Endothelial cell of umbilical vein (primary cell): ENCODE measurements at regions of chr5 and their contacts with region 1.

Region 1: GRCh38 chr5:77491783-77492652 is at the start of gene WDR41:
- DNase-seq: peak; percentile 96
- H3K4me3 ChIP-seq: peak within 1 kb of the TSS; percentile 89 to 94 (median 90)
- H3K27ac ChIP-seq: peak within 1 kb of the TSS; percentile 79
- H3K4me1 ChIP-seq: peaks cover 9% of the 10 kb centered on the region
- H3K27me3 ChIP-seq: peaks cover 12 to 25% of the 10 kb centered on the region in 2 experiments
- CTCF ChIP-seq: peak; percentile 93 to 94
- POLR2A ChIP-seq: peak; percentile 54
- total RNA-seq, gene WDR41: 23.9 and 33.6 TPM in 2 replicates

Region 2: DNA sequence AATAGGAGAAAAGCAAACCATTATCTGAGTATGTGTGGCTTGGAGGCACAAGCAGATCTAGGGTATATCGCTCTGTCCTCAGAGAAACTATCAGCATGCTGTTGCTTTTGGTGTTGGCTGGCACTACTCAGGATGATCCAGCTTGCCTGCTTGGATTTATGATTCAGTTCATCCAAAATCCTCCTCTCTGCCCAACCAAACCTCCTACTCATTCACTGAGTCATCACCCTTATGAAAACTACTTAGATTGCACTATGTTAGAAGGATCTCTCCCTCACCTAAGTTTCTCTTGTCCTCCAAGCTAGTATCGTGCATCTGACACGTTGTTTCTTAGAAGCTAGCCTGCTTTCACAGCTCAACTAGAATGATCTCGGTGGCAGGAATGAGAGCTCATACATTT is 390.7 kb before region 1 on chr5:
- CTCF ChIA-PET with region 1: no interaction called
- POLR2A ChIA-PET with region 1: no interaction called
- dilution Hi-C with region 1: no loop called
- intact Hi-C with region 1: no loop called
- DNase-seq: no peak
- H3K4me3 ChIP-seq: no peak overlapping the region
- H3K27ac ChIP-seq: no peak overlapping the region
- H3K4me1 ChIP-seq: no peaks in the 10 kb centered on the region
- H3K27me3 ChIP-seq: no peaks in the 10 kb centered on the region
- CTCF ChIP-seq: no peak
- POLR2A ChIP-seq: no peak

Region 3: GRCh38 chr5:77129391-77129990 is 362.5 kb before region 1 on chr5:
- CTCF ChIA-PET with region 1: interaction called, 5 read pairs
- POLR2A ChIA-PET with region 1: no interaction called
- dilution Hi-C with region 1: no loop called
- intact Hi-C with region 1: loop called (anchors 5 kb)
- DNase-seq: peak; percentile 17
- H3K4me3 ChIP-seq: no peak overlapping the region
- H3K27ac ChIP-seq: no peak overlapping the region
- H3K4me1 ChIP-seq: peaks cover 10% of the 10 kb centered on the region
- H3K27me3 ChIP-seq: no peaks in the 10 kb centered on the region
- CTCF ChIP-seq: peak; percentile 50 to 59
- POLR2A ChIP-seq: no peak